Activated B cell treated with CpG ODN at 0.5 μM for 24 hours (primary cell): ENCODE measurements at regions of chr1 and their contacts with region 1.

Region 1: DNA sequence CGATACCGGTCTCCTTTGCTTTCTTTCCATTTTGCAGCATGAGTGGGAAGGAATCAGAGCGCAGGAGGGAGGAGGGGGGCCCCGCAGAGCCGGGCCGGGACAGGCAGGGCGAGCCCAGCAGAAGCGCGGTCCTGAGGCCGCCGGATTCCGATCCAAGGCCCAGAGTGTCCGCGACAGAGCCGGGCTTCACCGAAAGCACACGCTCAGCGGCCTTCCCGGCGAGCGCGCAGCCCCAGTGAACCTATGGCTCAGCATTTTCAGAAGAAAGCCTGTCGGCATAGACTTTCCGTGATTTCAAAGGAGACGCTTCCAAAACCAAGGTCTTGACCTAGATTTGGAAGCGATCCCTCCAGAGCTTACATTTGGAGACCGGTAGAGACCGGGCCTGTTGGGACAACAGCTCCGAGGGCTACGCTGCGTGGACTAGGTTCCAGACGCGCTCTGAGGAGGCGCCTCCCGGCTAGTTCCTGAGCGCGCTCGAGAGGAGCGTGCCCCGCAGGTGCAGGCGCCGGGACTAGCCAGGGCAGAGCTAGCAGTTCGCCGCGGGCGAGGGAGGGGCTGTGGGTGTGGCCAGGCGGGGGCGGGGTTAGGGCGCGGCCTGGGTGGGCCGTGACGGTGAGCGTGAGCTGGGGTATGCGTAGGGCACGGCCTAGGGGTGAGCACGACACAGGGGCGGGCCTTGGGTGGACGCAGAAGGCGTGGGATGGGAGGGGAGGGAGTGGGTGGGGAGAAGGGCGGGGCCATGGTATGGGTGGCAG is 27.8 kb upstream of the PRSS38 start:
- DNase-seq: peak; percentile 83
- ATAC-seq: peak; percentile 93
- H3K4me3 Mint-ChIP-seq: peak overlapping the region; percentile 86
- H3K27ac Mint-ChIP-seq: peak overlapping the region; percentile 61
- H3K4me1 Mint-ChIP-seq: peaks cover 22% of the 10 kb centered on the region
- H3K27me3 Mint-ChIP-seq: no peaks in the 10 kb centered on the region
- CTCF ChIP-seq: no peak

Region 2: GRCh38 chr1:227563324-227564201 is 224.1 kb before region 1 on chr1 and contains the start of gene ZNF678:
- CTCF ChIA-PET with region 1: no interaction called
- POLR2A ChIA-PET with region 1: interaction called, 5 read pairs
- intact Hi-C with region 1: loop called (anchors 5 kb)
- DNase-seq: peak; percentile 77
- ATAC-seq: peak; percentile 89
- H3K4me3 Mint-ChIP-seq: peak within 1 kb of the TSS; percentile 95
- H3K27ac Mint-ChIP-seq: peak within 1 kb of the TSS; percentile 94
- H3K4me1 Mint-ChIP-seq: peaks cover 48% of the 10 kb centered on the region
- H3K27me3 Mint-ChIP-seq: peaks cover 8% of the 10 kb centered on the region
- CTCF ChIP-seq: no peak
- total RNA-seq, gene ZNF678: 15.4 and 20.3 TPM in 2 replicates

Region 3: DNA sequence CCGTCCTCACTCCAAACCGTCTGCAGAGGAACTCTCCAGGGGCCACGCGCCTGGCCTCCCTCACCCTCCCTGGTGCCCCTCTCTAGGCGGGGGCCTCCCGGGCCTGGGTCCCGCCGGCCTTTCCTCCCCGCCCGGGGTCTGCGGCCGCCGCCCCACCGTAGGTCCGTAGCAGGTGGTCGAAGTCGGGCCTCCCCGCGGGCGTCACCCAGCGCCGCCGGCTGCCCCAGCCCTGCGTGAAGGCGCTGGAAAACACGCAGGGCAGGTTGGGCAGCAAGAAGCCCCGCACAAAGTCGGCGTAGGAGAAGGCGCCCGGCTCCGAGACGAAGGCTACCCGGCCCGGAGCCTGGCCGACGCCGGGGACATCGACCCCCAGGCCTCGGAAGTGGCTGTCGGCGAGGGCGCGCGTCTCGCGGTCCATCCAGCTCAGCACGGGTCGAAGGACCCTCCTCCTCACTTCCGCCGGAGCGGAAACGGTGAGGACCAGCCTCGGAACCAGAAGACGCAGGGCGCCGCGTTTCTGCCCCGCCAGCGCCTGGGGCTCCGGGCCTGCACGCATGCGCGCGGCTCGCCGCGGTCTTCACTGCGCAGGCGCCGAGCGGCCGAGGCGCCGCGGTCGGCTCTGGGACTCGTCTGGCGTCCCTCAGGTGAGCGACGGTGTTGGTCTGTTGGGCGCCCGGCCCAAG is 52.7 kb before region 1 on chr1 and contains the starts of genes JMJD4 and SNAP47:
- CTCF ChIA-PET with region 1: no interaction called
- POLR2A ChIA-PET with region 1: interaction called, 6 read pairs
- intact Hi-C with region 1: loop called (anchors 1 kb)
- DNase-seq: peak; percentile 97
- ATAC-seq: peak; percentile 91
- H3K4me3 Mint-ChIP-seq: peak within 1 kb of the TSS; percentile 87
- H3K27ac Mint-ChIP-seq: peak within 1 kb of the TSS; percentile 78
- H3K4me1 Mint-ChIP-seq: peaks cover 42% of the 10 kb centered on the region
- H3K27me3 Mint-ChIP-seq: no peaks in the 10 kb centered on the region
- CTCF ChIP-seq: no peak
- total RNA-seq, gene JMJD4: 23.5 and 26.7 TPM in 2 replicates
- total RNA-seq, gene SNAP47: 24.2 and 24.3 TPM in 2 replicates

Region 4: GRCh38 chr1:227828786-227829185 is 41.1 kb after region 1 on chr1:
- CTCF ChIA-PET with region 1: no interaction called
- POLR2A ChIA-PET with region 1: no interaction called
- intact Hi-C with region 1: no loop called
- DNase-seq: no peak
- ATAC-seq: no peak
- H3K4me3 Mint-ChIP-seq: no peak overlapping the region
- H3K27ac Mint-ChIP-seq: no peak overlapping the region
- H3K4me1 Mint-ChIP-seq: no peaks in the 10 kb centered on the region
- H3K27me3 Mint-ChIP-seq: peaks cover 30% of the 10 kb centered on the region
- CTCF ChIP-seq: no peak

Region 5: GRCh38 chr1:228139944-228140656 is 352.4 kb after region 1 on chr1 and contains the start of gene GUK1:
- CTCF ChIA-PET with region 1: no interaction called
- POLR2A ChIA-PET with region 1: no interaction called
- intact Hi-C with region 1: loop called (anchors 1 kb)
- DNase-seq: peak; percentile 99
- ATAC-seq: peak; percentile 92
- H3K4me3 Mint-ChIP-seq: peak within 1 kb of the TSS; percentile 96
- H3K27ac Mint-ChIP-seq: peak within 1 kb of the TSS; percentile 99
- H3K4me1 Mint-ChIP-seq: peaks cover 71% of the 10 kb centered on the region
- H3K27me3 Mint-ChIP-seq: no peaks in the 10 kb centered on the region
- CTCF ChIP-seq: no peak
- total RNA-seq, gene GUK1: 104 and 119 TPM in 2 replicates

Region 6: DNA sequence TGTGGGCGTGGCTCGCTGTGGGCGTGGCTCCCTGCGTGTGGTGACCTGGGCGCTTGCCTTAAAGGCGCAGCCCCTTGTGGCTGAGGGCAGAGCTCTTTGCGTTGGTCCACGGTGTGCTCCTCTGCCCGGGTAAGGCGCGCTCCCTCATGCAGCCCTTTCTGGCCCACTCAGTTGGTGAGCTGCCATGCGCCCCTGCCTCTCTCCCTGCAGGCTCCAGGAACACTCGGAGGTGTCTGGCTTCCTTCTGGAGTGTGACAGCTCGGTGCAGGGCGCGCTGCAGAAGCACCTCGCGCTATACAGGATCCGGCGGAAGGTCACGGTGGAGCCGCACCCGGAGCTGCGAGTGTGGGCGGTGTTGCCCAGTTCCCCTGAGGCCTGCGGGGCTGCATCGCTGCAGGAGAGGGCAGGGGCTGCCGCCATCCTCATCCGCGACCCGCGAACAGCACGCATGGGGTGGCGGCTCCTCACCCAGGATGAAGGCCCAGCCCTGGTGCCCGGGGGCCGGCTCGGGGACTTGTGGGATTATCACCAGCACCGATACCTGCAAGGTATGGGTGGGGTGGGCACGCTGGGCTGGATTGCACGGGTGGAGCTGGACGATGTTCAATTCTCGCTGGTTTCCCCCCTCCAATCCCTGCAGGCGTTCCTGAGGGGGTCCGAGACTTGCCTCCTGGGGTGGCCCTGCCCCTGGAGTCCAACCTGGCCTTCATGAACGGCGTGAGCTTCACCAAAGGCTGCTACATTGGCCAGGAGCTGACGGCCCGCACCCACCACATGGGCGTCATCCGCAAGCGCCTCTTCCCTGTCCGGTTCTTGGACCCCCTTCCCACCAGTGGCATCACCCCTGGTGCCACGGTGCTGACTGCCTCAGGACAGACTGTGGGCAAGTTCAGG is 387.0 kb after region 1 on chr1:
- CTCF ChIA-PET with region 1: no interaction called
- POLR2A ChIA-PET with region 1: no interaction called
- intact Hi-C with region 1: loop called (anchors 2 kb)
- DNase-seq: no peak
- ATAC-seq: peak; percentile 59
- H3K4me3 Mint-ChIP-seq: no peak overlapping the region
- H3K27ac Mint-ChIP-seq: no peak overlapping the region
- H3K4me1 Mint-ChIP-seq: peaks cover 6% of the 10 kb centered on the region
- H3K27me3 Mint-ChIP-seq: no peaks in the 10 kb centered on the region
- CTCF ChIP-seq: no peak

Region 7: DNA sequence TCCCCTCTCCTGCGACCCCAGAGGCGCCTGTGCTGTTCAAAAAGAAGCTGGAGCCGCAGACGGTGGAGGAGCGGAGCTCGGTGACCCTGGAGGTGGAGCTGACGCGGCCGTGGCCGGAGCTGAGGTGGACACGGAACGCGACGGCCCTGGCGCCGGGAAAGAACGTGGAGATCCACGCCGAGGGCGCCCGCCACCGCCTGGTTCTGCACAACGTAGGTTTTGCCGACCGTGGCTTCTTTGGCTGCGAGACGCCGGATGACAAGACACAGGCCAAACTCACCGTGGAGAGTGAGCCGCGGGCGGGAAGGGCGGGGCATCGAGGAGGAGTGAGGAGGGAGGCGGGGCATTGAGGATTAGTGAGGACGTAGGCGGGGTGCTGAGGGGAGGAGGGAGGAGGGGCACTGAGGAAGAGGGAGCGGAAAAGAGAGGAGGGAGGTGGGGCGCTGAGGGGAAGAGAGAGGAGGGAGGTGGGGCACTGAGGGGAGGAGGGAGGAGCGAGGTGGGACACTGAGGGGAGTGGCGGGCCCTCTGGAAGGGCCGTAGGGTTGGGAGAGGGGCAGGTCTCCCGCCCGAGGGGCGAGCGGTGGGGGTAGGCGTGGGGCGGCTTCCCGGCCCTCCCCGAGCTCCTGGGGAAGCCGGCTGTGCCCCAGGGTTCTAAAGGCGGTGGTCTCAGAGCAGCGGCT is 488.2 kb after region 1 on chr1:
- CTCF ChIA-PET with region 1: no interaction called
- POLR2A ChIA-PET with region 1: no interaction called
- intact Hi-C with region 1: loop called (anchors 5 kb)
- DNase-seq: peak; percentile 66
- ATAC-seq: peak; percentile 98
- H3K4me3 Mint-ChIP-seq: peak overlapping the region; percentile 82
- H3K27ac Mint-ChIP-seq: no peak overlapping the region
- H3K4me1 Mint-ChIP-seq: peaks cover 8% of the 10 kb centered on the region
- H3K27me3 Mint-ChIP-seq: no peaks in the 10 kb centered on the region
- CTCF ChIP-seq: no peak

Region 8: GRCh38 chr1:228500901-228501871 is 713.5 kb after region 1 on chr1:
- CTCF ChIA-PET with region 1: no interaction called
- POLR2A ChIA-PET with region 1: no interaction called
- intact Hi-C with region 1: loop called (anchors 5 kb)
- DNase-seq: peak; percentile 72
- ATAC-seq: peak; percentile 96
- H3K4me3 Mint-ChIP-seq: peak overlapping the region; percentile 77
- H3K27ac Mint-ChIP-seq: peak overlapping the region; percentile 84
- H3K4me1 Mint-ChIP-seq: peaks cover 17% of the 10 kb centered on the region
- H3K27me3 Mint-ChIP-seq: peaks cover 9% of the 10 kb centered on the region
- CTCF ChIP-seq: peak; percentile 91